ENCODE measurements at regions of chr18 and their contacts with region 1.

Region 1: GRCh38 chr18:46073474-46074331 is 1.6 kb upstream of the PSTPIP2 start:
- DNase-seq: peak; percentile 44 to 62 (median 60)
- H3K4me3 ChIP-seq: peak overlapping the region in 1 of 3 experiments; percentile 12
- H3K4me3 Mint-ChIP-seq: peak overlapping the region; percentile 9 to 68
- H3K27ac ChIP-seq: no peak overlapping the region
- H3K27ac Mint-ChIP-seq: peak overlapping the region in 6 of 7 donors; percentile 16 to 60 (median 50)
- H3K4me1 ChIP-seq: peaks cover 35 to 45% of the 10 kb centered on the region in 2 donors
- H3K4me1 Mint-ChIP-seq: peaks cover 41% of the 10 kb centered on the region
- H3K27me3 ChIP-seq: no peaks in the 10 kb centered on the region
- H3K27me3 Mint-ChIP-seq: peaks cover 0 to 1% (median 0%) of the 10 kb centered on the region in 3 donors
- CTCF ChIP-seq: peak; percentile 77

Region 2: GRCh38 chr18:45664824-45665763 is 408.6 kb before region 1 on chr18:
- intact Hi-C with region 1: loop called (anchors 10 kb)
- DNase-seq: peak; percentile 52 to 74 (median 65)
- H3K4me3 ChIP-seq: no peak overlapping the region
- H3K4me3 Mint-ChIP-seq: peak overlapping the region in 1 of 2 donors; percentile 73
- H3K27ac ChIP-seq: no peak overlapping the region
- H3K27ac Mint-ChIP-seq: peak overlapping the region in 6 of 7 donors; percentile 19 to 76 (median 68)
- H3K4me1 ChIP-seq: peaks cover 50 to 61% of the 10 kb centered on the region in 2 donors
- H3K4me1 Mint-ChIP-seq: peaks cover 56% of the 10 kb centered on the region
- H3K27me3 ChIP-seq: no peaks in the 10 kb centered on the region
- H3K27me3 Mint-ChIP-seq: peaks cover 0 to 1% (median 0%) of the 10 kb centered on the region in 3 donors
- CTCF ChIP-seq: peak; percentile 93

Region 3: DNA sequence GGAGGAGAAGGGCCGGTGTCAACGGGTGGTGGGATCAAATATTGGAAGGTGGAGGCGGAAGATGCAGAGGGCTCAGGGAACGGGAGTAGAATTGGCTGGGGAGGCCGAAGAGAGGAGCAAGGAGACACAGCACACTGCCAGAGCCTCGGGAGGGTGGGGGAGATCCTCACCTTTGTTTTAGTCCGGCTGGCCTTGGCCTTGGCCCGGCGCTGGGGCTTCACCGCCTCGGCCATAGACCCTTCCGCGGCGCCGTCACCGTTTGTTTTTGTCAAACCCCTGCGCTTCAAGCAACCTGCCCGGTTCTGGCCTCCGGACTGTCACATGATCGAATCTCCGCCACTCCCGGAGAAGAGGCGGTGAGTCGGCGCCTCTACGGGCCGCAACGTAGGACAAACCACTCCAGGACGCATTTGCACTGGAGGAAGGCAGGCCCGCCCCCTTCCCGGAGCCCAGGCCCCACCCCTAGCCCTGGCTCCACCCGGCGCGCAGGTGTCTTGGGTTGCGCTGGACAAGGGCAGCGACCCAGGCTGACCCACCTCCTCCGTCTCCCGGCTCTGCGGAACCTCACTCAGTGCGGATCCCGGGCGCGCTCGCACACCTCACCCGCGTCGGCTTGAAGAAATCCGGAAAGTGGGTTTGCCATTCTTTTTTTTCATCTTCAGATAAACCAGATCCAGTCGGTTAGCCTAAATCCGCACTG is 106.5 kb before region 1 on chr18 and contains the start of gene EPG5:
- intact Hi-C with region 1: loop called (anchors 5 to 10 kb)
- DNase-seq: peak; percentile 89 to 91 (median 89)
- H3K4me3 ChIP-seq: peak within 1 kb of the TSS; percentile 91 to 97 (median 94)
- H3K4me3 Mint-ChIP-seq: peak within 1 kb of the TSS; percentile 98 to 99
- H3K27ac ChIP-seq: peak within 1 kb of the TSS; percentile 90 to 94
- H3K27ac Mint-ChIP-seq: peak within 1 kb of the TSS; percentile 94 to 100 (median 95)
- H3K4me1 ChIP-seq: peaks cover 25 to 40% of the 10 kb centered on the region in 2 donors
- H3K4me1 Mint-ChIP-seq: peaks cover 38% of the 10 kb centered on the region
- H3K27me3 ChIP-seq: no peaks in the 10 kb centered on the region
- H3K27me3 Mint-ChIP-seq: peaks cover 0 to 1% (median 0%) of the 10 kb centered on the region in 3 donors
- CTCF ChIP-seq: no peak
- polyA plus RNA-seq, gene EPG5: 1.3 to 15.9 (median 1.4) TPM

Region 4: GRCh38 chr18:45974088-45974536 is 99.6 kb before region 1 on chr18:
- intact Hi-C with region 1: loop called (anchors 5 to 10 kb)
- DNase-seq: peak; percentile 85 to 94 (median 91)
- H3K4me3 ChIP-seq: peak overlapping the region in 1 of 3 experiments; percentile 36
- H3K4me3 Mint-ChIP-seq: peak overlapping the region; percentile 7 to 82
- H3K27ac ChIP-seq: peak overlapping the region; percentile 37 to 78
- H3K27ac Mint-ChIP-seq: peak overlapping the region; percentile 79 to 91 (median 89)
- H3K4me1 ChIP-seq: peaks cover 5 to 15% of the 10 kb centered on the region in 2 donors
- H3K4me1 Mint-ChIP-seq: peaks cover 18% of the 10 kb centered on the region
- H3K27me3 ChIP-seq: no peaks in the 10 kb centered on the region
- H3K27me3 Mint-ChIP-seq: peaks cover 0 to 1% (median 0%) of the 10 kb centered on the region in 3 donors
- CTCF ChIP-seq: peak; percentile 80

Region 5: GRCh38 chr18:45993389-45993788 is 80.3 kb before region 1 on chr18:
- intact Hi-C with region 1: loop called in 1 of 2 experiments (anchors 10 kb)
- DNase-seq: no peak
- H3K4me3 ChIP-seq: no peak overlapping the region
- H3K4me3 Mint-ChIP-seq: no peak overlapping the region
- H3K27ac ChIP-seq: no peak overlapping the region
- H3K27ac Mint-ChIP-seq: no peak overlapping the region
- H3K4me1 ChIP-seq: peaks cover 9% of the 10 kb centered on the region in 2 donors
- H3K4me1 Mint-ChIP-seq: peaks cover 9% of the 10 kb centered on the region
- H3K27me3 ChIP-seq: no peaks in the 10 kb centered on the region
- H3K27me3 Mint-ChIP-seq: no peaks in the 10 kb centered on the region
- CTCF ChIP-seq: no peak

Region 6: GRCh38 chr18:46019941-46020340 is 53.8 kb before region 1 on chr18:
- intact Hi-C with region 1: loop called in 1 of 2 experiments (anchors 10 kb)
- DNase-seq: no peak
- H3K4me3 ChIP-seq: no peak overlapping the region
- H3K4me3 Mint-ChIP-seq: no peak overlapping the region
- H3K27ac ChIP-seq: peak overlapping the region in 1 of 2 donors; percentile 59
- H3K27ac Mint-ChIP-seq: peak overlapping the region in 1 of 7 donors; percentile 76
- H3K4me1 ChIP-seq: peaks cover 8 to 10% of the 10 kb centered on the region in 2 donors
- H3K4me1 Mint-ChIP-seq: peaks cover 22% of the 10 kb centered on the region
- H3K27me3 ChIP-seq: no peaks in the 10 kb centered on the region
- H3K27me3 Mint-ChIP-seq: peaks cover 0 to 1% (median 0%) of the 10 kb centered on the region in 3 donors
- CTCF ChIP-seq: no peak

Region 7: GRCh38 chr18:47191961-47192360 is 1118.3 kb after region 1 on chr18:
- intact Hi-C with region 1: no loop called
- DNase-seq: no peak
- H3K4me3 ChIP-seq: no peak overlapping the region
- H3K4me3 Mint-ChIP-seq: no peak overlapping the region
- H3K27ac ChIP-seq: no peak overlapping the region
- H3K27ac Mint-ChIP-seq: no peak overlapping the region
- H3K4me1 ChIP-seq: no peaks in the 10 kb centered on the region
- H3K4me1 Mint-ChIP-seq: peaks cover 5% of the 10 kb centered on the region
- H3K27me3 ChIP-seq: peaks cover 0 to 6% of the 10 kb centered on the region in 2 donors
- H3K27me3 Mint-ChIP-seq: peaks cover 5 to 13% (median 7%) of the 10 kb centered on the region in 3 donors
- CTCF ChIP-seq: no peak

Measured in CD14-positive monocyte (primary cell).